CD14-positive monocyte (primary cell): ENCODE measurements at regions of chr9 and their contacts with region 1.

Region 1: DNA sequence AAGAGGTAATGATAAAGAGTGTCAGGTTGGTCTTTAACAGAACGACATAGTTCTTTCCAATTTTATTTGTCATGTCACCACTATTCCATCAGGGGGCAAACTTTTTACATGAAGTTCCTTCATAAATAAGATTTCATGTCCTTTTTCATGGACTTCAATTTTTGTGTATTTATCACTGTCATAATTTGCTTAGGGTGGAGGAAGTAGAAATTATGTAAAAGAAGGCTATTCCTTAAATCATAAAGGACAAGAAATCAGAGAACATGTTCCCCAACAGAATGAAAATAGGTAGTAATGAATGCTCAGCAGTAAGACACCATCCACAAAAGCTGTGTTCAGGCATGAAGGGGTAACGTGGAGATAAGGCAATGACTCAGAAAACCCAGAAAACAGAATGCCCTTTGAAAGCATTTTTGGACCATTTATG is 72.7 kb downstream of the ZFAND5 start:
- DNase-seq: peak; percentile 38 to 68 (median 53)
- H3K4me3 ChIP-seq: peak overlapping the region in 2 of 3 experiments; percentile 27 to 50
- H3K4me3 Mint-ChIP-seq: peak overlapping the region; percentile 1 to 56
- H3K27ac ChIP-seq: peak overlapping the region; percentile 1 to 85
- H3K27ac Mint-ChIP-seq: peak overlapping the region; percentile 85 to 94 (median 91)
- H3K4me1 ChIP-seq: peaks cover 43 to 49% of the 10 kb centered on the region in 2 donors
- H3K4me1 Mint-ChIP-seq: peaks cover 42% of the 10 kb centered on the region
- H3K27me3 ChIP-seq: no peaks in the 10 kb centered on the region
- H3K27me3 Mint-ChIP-seq: peaks cover 0 to 1% (median 0%) of the 10 kb centered on the region in 3 donors
- CTCF ChIP-seq: peak; percentile 80

Region 2: GRCh38 chr9:72305102-72305546 is 12.9 kb after region 1 on chr9:
- intact Hi-C with region 1: loop called in 1 of 2 experiments (anchors 2 kb)
- DNase-seq: peak; percentile 98 to 99 (median 99)
- H3K4me3 ChIP-seq: peak overlapping the region; percentile 56 to 99 (median 82)
- H3K4me3 Mint-ChIP-seq: peak overlapping the region; percentile 73 to 91
- H3K27ac ChIP-seq: peak overlapping the region; percentile 87 to 92
- H3K27ac Mint-ChIP-seq: peak overlapping the region; percentile 97 to 99 (median 97)
- H3K4me1 ChIP-seq: peaks cover 60 to 73% of the 10 kb centered on the region in 2 donors
- H3K4me1 Mint-ChIP-seq: peaks cover 70% of the 10 kb centered on the region
- H3K27me3 ChIP-seq: no peaks in the 10 kb centered on the region
- H3K27me3 Mint-ChIP-seq: no peaks in the 10 kb centered on the region
- CTCF ChIP-seq: no peak

Region 3: GRCh38 chr9:72333709-72334108 is 41.4 kb after region 1 on chr9:
- intact Hi-C with region 1: no loop called
- DNase-seq: no peak
- H3K4me3 ChIP-seq: no peak overlapping the region
- H3K4me3 Mint-ChIP-seq: no peak overlapping the region
- H3K27ac ChIP-seq: no peak overlapping the region
- H3K27ac Mint-ChIP-seq: peak overlapping the region in 1 of 7 donors; percentile 5
- H3K4me1 ChIP-seq: no peaks in the 10 kb centered on the region
- H3K4me1 Mint-ChIP-seq: peaks cover 4% of the 10 kb centered on the region
- H3K27me3 ChIP-seq: no peaks in the 10 kb centered on the region
- H3K27me3 Mint-ChIP-seq: no peaks in the 10 kb centered on the region
- CTCF ChIP-seq: no peak

Region 4: GRCh38 chr9:72371151-72371550 is 78.9 kb after region 1 on chr9:
- intact Hi-C with region 1: no loop called
- DNase-seq: no peak
- H3K4me3 ChIP-seq: no peak overlapping the region
- H3K4me3 Mint-ChIP-seq: no peak overlapping the region
- H3K27ac ChIP-seq: peak overlapping the region in 1 of 2 donors; percentile 18
- H3K27ac Mint-ChIP-seq: peak overlapping the region in 4 of 7 donors; percentile 8 to 78 (median 67)
- H3K4me1 ChIP-seq: peaks cover 13 to 16% of the 10 kb centered on the region in 2 donors
- H3K4me1 Mint-ChIP-seq: peaks cover 14% of the 10 kb centered on the region
- H3K27me3 ChIP-seq: no peaks in the 10 kb centered on the region
- H3K27me3 Mint-ChIP-seq: peaks cover 0 to 4% (median 3%) of the 10 kb centered on the region in 3 donors
- CTCF ChIP-seq: no peak

Region 5: GRCh38 chr9:72526901-72527800 is 234.9 kb after region 1 on chr9:
- intact Hi-C with region 1: loop called in 1 of 2 experiments (anchors 5 kb)
- DNase-seq: peak; percentile 85 to 92 (median 85)
- H3K4me3 ChIP-seq: peak overlapping the region; percentile 29 to 69 (median 41)
- H3K4me3 Mint-ChIP-seq: peak overlapping the region; percentile 70 to 97
- H3K27ac ChIP-seq: peak overlapping the region; percentile 81 to 95
- H3K27ac Mint-ChIP-seq: peak overlapping the region; percentile 90 to 98 (median 93)
- H3K4me1 ChIP-seq: peaks cover 29 to 33% of the 10 kb centered on the region in 2 donors
- H3K4me1 Mint-ChIP-seq: peaks cover 32% of the 10 kb centered on the region
- H3K27me3 ChIP-seq: no peaks in the 10 kb centered on the region
- H3K27me3 Mint-ChIP-seq: peaks cover 0 to 2% (median 0%) of the 10 kb centered on the region in 3 donors
- CTCF ChIP-seq: no peak

Region 6: DNA sequence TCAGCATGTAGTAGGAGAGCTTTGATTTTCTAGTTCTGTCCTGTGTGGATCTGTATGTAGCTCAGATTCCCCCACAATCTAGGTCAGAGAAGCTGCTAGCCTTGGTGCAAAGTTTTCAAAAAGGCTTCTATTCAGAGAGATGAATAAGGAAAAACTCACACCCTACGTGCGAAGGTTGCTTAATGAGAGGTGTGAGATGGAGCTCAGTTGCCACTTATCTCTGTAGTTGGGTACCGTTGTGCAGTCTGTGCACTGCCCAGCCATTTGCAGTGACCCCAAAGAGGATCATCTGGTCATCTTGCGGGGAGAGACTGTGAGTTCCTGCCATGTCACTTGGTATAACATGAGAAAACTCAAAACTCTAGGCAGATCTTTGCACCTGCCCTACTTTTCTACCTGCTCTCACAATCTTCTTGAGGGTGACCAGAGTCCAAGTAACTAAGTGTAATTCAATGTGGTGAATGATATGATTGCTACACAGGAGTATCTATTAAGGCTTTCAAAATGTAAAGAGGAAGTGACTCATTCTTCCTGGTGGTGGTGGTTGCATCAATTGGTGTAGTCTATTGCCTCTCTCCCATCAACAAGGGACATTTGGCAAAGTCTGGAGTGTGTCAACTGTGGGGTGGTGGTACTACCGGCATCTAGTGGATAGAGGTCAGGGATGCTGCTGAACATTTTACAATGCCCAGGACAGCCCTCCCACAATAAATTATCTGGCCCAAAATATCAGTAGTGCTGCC is 294.3 kb after region 1 on chr9:
- intact Hi-C with region 1: loop called (anchors 5 kb)
- DNase-seq: peak; percentile 91 to 98 (median 98)
- H3K4me3 ChIP-seq: peak overlapping the region in 1 of 3 experiments; percentile 37
- H3K4me3 Mint-ChIP-seq: peak overlapping the region; percentile 24 to 71
- H3K27ac ChIP-seq: peak overlapping the region; percentile 75
- H3K27ac Mint-ChIP-seq: peak overlapping the region; percentile 72 to 97 (median 96)
- H3K4me1 ChIP-seq: peaks cover 67 to 72% of the 10 kb centered on the region in 2 donors
- H3K4me1 Mint-ChIP-seq: peaks cover 68% of the 10 kb centered on the region
- H3K27me3 ChIP-seq: no peaks in the 10 kb centered on the region
- H3K27me3 Mint-ChIP-seq: peaks cover 0 to 4% (median 2%) of the 10 kb centered on the region in 3 donors
- CTCF ChIP-seq: peak; percentile 32

Region 7: GRCh38 chr9:72592502-72593403 is 300.5 kb after region 1 on chr9:
- intact Hi-C with region 1: loop called (anchors 5 kb)
- DNase-seq: peak; percentile 60 to 74 (median 73)
- H3K4me3 ChIP-seq: peak overlapping the region in 1 of 3 experiments; percentile 5
- H3K4me3 Mint-ChIP-seq: peak overlapping the region in 1 of 2 donors; percentile 66
- H3K27ac ChIP-seq: peak overlapping the region; percentile 51 to 71
- H3K27ac Mint-ChIP-seq: peak overlapping the region; percentile 85 to 96 (median 92)
- H3K4me1 ChIP-seq: peaks cover 72 to 77% of the 10 kb centered on the region in 2 donors
- H3K4me1 Mint-ChIP-seq: peaks cover 71% of the 10 kb centered on the region
- H3K27me3 ChIP-seq: no peaks in the 10 kb centered on the region
- H3K27me3 Mint-ChIP-seq: peaks cover 0 to 4% (median 2%) of the 10 kb centered on the region in 3 donors
- CTCF ChIP-seq: peak; percentile 98